Activated B cell treated with CpG ODN at 0.5 μM for 24 hours (primary cell): ENCODE measurements at regions of chr19 and their contacts with region 1.

Region 1: DNA sequence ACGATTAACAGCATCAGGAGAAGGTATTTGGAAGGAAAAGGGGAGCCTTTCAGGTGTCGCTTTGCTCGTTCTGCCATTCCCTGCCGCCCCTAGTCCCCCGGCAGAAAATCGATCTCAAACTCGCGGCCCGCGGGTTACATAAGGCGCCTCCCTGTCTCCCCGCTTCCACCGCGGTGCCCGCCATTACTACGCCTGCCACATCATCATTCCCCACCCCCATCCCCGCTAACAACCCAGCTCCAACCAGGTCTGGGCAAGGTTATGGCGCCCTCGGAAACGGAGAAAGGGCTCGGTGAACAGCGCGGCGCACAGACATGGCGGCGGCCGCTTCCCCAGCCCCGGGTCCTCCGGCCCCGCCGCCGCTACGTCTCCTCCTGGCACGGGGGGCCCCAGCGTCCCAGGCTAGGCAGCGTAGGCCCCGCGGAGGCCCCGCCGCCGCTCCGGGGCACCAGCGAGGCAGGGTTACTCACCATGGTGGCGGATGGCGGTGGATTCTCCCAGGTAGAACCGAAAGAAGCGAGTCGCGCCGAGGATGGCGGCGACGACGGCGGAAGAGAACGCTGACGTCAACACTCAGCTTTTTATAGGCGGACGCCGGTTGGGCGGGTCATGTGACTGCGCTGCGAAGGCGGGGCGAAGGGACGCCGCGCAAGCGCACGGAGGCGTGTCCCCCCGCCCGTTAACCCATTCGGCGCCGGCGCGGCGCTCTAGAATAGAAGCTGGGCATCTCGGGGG is at the start of gene EEF2:
- DNase-seq: peak; percentile 91
- ATAC-seq: peak; percentile 38
- H3K4me3 Mint-ChIP-seq: peak within 1 kb of the TSS; percentile 96
- H3K27ac Mint-ChIP-seq: peak within 1 kb of the TSS; percentile 91
- H3K4me1 Mint-ChIP-seq: peaks cover 65% of the 10 kb centered on the region
- H3K27me3 Mint-ChIP-seq: no peaks in the 10 kb centered on the region
- CTCF ChIP-seq: no peak
- total RNA-seq, gene EEF2: 2,958 and 3,229 TPM in 2 replicates

Region 2: DNA sequence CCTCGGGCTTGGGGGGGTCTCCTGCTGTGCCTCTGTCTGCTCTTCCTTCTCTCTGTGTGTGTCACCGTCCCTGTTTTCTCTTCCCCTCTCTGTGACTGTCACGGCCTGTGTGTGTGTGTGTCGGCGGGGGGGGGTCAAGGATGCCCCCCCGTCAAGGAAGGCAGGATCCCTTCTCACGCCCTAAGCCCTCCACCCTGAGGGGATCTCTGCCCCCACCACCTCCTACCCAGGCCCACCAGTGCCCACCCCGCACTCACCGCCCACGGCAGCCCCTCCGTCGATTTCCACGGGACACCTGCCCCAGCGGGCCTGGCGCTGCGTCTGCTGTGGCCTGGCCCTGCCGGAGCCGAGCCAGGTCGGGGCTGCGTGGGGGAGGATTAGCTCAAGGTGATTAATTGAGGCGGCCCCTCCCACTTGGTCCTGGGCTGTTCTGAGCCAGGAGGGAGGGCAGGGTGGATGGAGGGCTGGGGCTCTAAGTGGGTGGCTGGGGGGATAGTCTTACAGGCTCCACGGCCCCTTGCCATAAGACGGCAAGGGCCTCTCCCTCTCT is 213.1 kb before region 1 on chr19 and contains the start of gene RAX2:
- CTCF ChIA-PET with region 1: no interaction called
- POLR2A ChIA-PET with region 1: no interaction called
- intact Hi-C with region 1: no loop called
- DNase-seq: no peak
- ATAC-seq: no peak
- H3K4me3 Mint-ChIP-seq: no peak within 1 kb of the TSS
- H3K27ac Mint-ChIP-seq: no peak within 1 kb of the TSS
- H3K4me1 Mint-ChIP-seq: no peaks in the 10 kb centered on the region
- H3K27me3 Mint-ChIP-seq: no peaks in the 10 kb centered on the region
- CTCF ChIP-seq: no peak
- total RNA-seq, gene RAX2: not detected in 2 replicates

Region 3: GRCh38 chr19:3809881-3810707 is 175.0 kb before region 1 on chr19:
- CTCF ChIA-PET with region 1: interaction called, 3 read pairs
- POLR2A ChIA-PET with region 1: interaction called, 5 read pairs
- intact Hi-C with region 1: loop called (anchors 5 kb)
- DNase-seq: no peak
- ATAC-seq: peak; percentile 66
- H3K4me3 Mint-ChIP-seq: peak overlapping the region; percentile 52
- H3K27ac Mint-ChIP-seq: peak overlapping the region; percentile 77
- H3K4me1 Mint-ChIP-seq: peaks cover 62% of the 10 kb centered on the region
- H3K27me3 Mint-ChIP-seq: no peaks in the 10 kb centered on the region
- CTCF ChIP-seq: no peak

Region 4: GRCh38 chr19:3852614-3853254 is 132.3 kb before region 1 on chr19:
- CTCF ChIA-PET with region 1: no interaction called
- POLR2A ChIA-PET with region 1: no interaction called
- intact Hi-C with region 1: no loop called
- DNase-seq: no peak
- ATAC-seq: peak; percentile 47
- H3K4me3 Mint-ChIP-seq: no peak overlapping the region
- H3K27ac Mint-ChIP-seq: no peak overlapping the region
- H3K4me1 Mint-ChIP-seq: peaks cover 20% of the 10 kb centered on the region
- H3K27me3 Mint-ChIP-seq: no peaks in the 10 kb centered on the region
- CTCF ChIP-seq: no peak

Region 5: GRCh38 chr19:4023600-4024398 is 38.7 kb after region 1 on chr19:
- CTCF ChIA-PET with region 1: no interaction called
- POLR2A ChIA-PET with region 1: interaction called, 12 read pairs
- intact Hi-C with region 1: no loop called
- DNase-seq: no peak
- ATAC-seq: no peak
- H3K4me3 Mint-ChIP-seq: no peak overlapping the region
- H3K27ac Mint-ChIP-seq: no peak overlapping the region
- H3K4me1 Mint-ChIP-seq: peaks cover 2% of the 10 kb centered on the region
- H3K27me3 Mint-ChIP-seq: no peaks in the 10 kb centered on the region
- CTCF ChIP-seq: no peak

Region 6: DNA sequence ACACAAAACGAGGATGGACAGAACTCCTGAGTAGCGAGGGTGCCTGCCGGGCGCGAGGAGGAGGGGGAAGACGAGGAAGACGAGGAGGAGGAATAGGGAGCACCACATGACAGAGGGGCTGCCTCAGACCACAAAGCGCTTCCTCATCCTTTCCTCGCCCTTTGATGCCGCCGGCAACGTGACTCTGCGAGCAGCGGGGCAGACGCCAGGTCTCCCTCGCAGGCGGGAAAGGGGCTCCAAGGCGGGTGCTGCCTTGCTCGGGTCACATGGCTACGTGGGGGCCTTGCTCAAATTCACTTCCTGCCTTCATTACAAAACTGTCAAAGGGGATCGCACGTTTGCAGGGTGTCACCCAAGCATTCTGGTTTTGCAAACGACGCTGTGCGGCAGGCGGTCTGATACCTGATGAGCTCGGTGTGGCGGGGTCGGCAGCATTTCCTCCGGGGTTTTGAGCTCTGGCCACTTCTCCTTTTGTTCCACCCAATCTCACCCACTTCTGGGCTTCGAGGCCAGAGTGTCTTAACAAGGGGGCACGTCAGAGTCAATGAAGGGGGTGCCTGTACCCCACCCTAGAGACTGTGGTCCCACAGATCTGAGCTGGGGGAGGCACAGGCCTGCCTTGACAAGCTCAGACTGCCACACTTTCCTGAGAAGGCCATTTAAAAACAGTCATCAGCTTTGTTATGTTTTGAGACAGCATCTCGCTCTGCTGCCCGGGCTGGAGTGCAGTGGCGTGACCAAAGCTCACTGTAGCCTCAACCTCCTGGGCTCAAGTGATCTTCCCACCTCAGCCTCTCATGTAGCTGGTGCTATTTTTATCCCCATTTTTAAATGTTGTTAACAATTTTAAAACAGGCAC is 123.9 kb after region 1 on chr19:
- CTCF ChIA-PET with region 1: interaction called, 4 read pairs
- POLR2A ChIA-PET with region 1: interaction called, 31 read pairs
- intact Hi-C with region 1: loop called (anchors 1 kb)
- DNase-seq: peak; percentile 70
- ATAC-seq: peak; percentile 87
- H3K4me3 Mint-ChIP-seq: peak overlapping the region; percentile 76
- H3K27ac Mint-ChIP-seq: peak overlapping the region; percentile 99
- H3K4me1 Mint-ChIP-seq: peaks cover 64% of the 10 kb centered on the region
- H3K27me3 Mint-ChIP-seq: no peaks in the 10 kb centered on the region
- CTCF ChIP-seq: no peak

Region 7: DNA sequence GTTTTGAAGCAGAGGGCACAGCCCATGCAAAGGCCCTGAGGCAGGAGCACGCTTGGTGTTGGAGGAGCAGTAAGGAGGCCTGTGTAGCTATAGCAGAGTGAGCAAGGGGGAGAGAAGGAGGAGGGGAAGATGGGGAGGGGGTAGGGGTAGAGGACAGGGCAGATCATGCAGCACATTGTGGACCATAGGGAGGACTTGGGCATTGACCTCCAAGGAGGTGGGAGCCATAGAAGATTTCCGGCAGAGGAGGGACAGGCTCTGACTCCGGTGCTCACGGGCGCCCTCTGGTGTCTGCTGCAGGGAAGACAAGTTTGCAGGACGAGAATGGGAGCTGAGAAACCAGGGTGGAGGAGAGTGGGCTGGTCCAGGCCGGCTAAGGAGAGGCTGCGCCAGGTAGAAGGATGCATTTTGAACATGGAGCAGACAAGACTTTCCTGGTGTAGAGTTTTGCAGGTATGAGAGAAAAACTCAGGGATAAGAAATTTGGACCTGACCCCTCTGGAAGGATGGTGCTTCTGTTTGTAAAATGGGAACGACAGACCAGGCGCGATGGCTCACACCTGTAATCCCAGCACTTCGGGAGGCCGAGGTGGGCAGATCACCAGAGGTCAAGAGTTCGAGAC is 154.7 kb after region 1 on chr19:
- CTCF ChIA-PET with region 1: interaction called, 31 read pairs
- POLR2A ChIA-PET with region 1: interaction called, 30 read pairs
- intact Hi-C with region 1: loop called (anchors 1 kb)
- DNase-seq: peak; percentile 84
- ATAC-seq: peak; percentile 95
- H3K4me3 Mint-ChIP-seq: no peak overlapping the region
- H3K27ac Mint-ChIP-seq: peak overlapping the region; percentile 10
- H3K4me1 Mint-ChIP-seq: peaks cover 14% of the 10 kb centered on the region
- H3K27me3 Mint-ChIP-seq: peaks cover 5% of the 10 kb centered on the region
- CTCF ChIP-seq: peak; percentile 71

Region 8: DNA sequence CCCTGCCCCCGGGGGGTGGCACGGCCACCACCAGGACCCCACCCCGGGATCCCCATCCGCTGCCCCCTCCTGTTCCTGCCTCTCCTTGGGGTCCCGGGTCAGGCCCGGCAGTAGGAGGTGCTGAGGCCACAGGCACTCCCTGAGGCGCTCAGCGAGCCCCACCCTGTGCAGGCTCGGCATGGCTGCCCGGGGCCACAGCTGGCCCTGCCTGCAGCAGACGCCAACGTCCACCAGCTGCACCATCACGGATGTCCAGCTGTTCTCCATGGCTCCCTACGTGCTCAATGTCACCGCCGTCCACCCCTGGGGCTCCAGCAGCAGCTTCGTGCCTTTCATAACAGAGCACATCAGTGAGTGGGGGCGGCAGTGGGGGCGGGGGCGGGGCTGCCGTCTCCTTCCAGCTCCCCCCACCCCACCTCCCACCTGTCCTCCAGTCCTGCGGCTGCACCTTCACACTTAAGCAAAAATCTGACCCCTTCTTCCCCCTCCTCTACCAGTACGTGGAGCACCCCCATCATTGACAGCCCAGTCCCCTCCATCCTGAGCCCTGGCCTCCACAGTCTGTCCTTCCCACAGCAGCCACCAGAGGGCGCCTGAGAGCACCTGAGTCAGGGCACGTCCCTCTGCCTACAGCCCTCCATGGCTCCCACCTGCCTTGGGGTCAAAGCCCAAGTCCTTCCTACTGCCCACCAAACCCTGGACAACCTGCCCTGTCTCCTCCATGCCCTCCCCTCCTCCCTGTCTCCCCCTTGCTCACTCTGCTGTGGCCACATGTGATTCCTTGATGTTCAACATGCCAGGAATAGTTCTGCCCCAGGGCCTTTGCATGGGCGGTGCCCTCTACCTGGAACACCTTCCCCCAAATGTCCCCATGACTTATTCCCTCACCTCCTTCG is 248.1 kb after region 1 on chr19:
- CTCF ChIA-PET with region 1: no interaction called
- POLR2A ChIA-PET with region 1: interaction called, 12 read pairs
- intact Hi-C with region 1: no loop called
- DNase-seq: peak; percentile 71
- ATAC-seq: no peak
- H3K4me3 Mint-ChIP-seq: peak overlapping the region; percentile 60
- H3K27ac Mint-ChIP-seq: peak overlapping the region; percentile 62
- H3K4me1 Mint-ChIP-seq: peaks cover 16% of the 10 kb centered on the region
- H3K27me3 Mint-ChIP-seq: no peaks in the 10 kb centered on the region
- CTCF ChIP-seq: no peak